ENCODE measurements at regions of chr1 and their contacts with region 1.

Region 1: GRCh38 chr1:192808518-192809306 is at the start of gene RGS2:
- DNase-seq: peak; percentile 92
- ATAC-seq: peak; percentile 96
- total RNA-seq, gene RGS2: 16.0 to 41.5 TPM

Region 2: GRCh38 chr1:192907545-192908243 is 99.0 kb after region 1 on chr1:
- intact Hi-C with region 1: loop called in 1 of 2 experiments (anchors 5 kb)
- DNase-seq: no peak
- ATAC-seq: no peak

Region 3: GRCh38 chr1:193019442-193020026 is 210.8 kb after region 1 on chr1:
- intact Hi-C with region 1: loop called (anchors 2 to 10 kb)
- DNase-seq: no peak
- ATAC-seq: peak; percentile 79

Region 4: GRCh38 chr1:193121616-193122593 is 313.2 kb after region 1 on chr1 and contains the start of gene CDC73:
- intact Hi-C with region 1: loop called in 1 of 2 experiments (anchors 10 kb)
- DNase-seq: peak; percentile 97 to 99
- ATAC-seq: peak; percentile 97
- total RNA-seq, gene CDC73: 44.8 to 46.2 TPM